Activated CD4-positive, alpha-beta T cell treated with anti-CD3 and anti-CD28 coated beads for 36 hours (primary cell): ENCODE measurements at regions of chr7 and their contacts with region 1.

Region 1: DNA sequence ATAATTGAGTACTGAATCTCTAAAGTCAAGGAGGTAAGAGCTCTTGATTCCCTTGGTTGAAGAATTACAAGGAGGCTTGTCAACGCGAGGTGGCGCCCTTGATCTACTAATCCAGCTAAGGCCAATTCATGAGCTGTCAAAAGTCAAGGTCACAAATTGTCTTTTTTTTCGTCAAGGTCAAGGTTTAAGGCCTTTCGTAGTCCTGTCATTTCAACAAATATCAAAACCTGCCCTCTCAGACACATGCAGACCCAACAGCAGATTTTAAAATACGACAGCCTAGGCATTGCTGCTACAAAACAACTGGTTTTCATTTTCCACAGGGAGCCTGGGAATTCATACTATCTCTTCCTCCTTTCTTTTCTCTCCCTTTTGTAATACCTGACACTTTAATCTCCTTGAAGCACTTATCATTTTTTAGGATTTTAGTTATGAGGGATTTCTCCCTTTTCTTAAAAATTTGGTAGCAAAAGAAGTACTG is 3.6 kb downstream of the HOXA13 start:
- DNase-seq: peak; percentile 92
- ATAC-seq: no peak
- H3K4me3 Mint-ChIP-seq: no peak overlapping the region
- H3K27ac Mint-ChIP-seq: no peak overlapping the region
- H3K4me1 Mint-ChIP-seq: peaks cover 24% of the 10 kb centered on the region
- H3K27me3 Mint-ChIP-seq: peaks cover 72% of the 10 kb centered on the region

Region 2: DNA sequence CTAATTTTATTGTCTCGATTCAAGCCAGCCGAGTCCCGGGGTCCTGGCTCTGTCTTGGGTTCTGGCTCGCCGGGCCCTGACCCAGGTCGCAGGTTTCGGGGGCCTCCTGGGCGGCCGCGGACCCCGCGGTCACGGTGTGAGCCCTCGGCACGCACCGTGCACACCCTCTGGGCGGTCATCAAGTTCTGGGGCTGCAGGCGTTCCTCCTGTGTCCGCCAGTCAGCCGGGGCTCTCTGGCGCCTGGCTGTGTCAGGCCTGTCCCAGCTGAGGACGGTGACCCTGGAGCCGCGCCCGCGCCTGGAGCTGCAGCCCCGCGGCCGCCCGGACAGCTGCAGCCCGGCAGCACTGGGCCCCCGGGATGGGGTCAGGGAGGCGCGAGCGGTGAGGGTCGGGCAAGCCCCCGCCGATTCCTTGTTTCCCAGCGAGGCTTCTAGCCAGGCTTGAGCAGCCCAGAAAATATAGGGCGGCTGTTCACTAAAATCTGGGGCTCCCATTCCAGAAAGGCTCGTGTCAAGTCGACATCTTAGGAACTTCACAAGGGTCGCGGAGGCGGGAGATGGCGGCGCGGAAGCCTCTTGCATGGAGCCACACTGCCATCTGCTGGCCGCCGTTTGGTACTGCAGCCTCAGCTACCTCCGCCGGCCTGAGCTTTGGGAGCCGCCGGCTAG is 35.6 kb before region 1 on chr7:
- CTCF ChIA-PET with region 1: interaction called, 3 read pairs
- POLR2A ChIA-PET with region 1: interaction called, 3 read pairs
- intact Hi-C with region 1: loop called (anchors 2 to 5 kb)
- DNase-seq: peak; percentile 91
- ATAC-seq: peak; percentile 50
- H3K4me3 Mint-ChIP-seq: peak overlapping the region; percentile 62
- H3K27ac Mint-ChIP-seq: no peak overlapping the region
- H3K4me1 Mint-ChIP-seq: peaks cover 24% of the 10 kb centered on the region
- H3K27me3 Mint-ChIP-seq: peaks cover 74% of the 10 kb centered on the region

Region 3: DNA sequence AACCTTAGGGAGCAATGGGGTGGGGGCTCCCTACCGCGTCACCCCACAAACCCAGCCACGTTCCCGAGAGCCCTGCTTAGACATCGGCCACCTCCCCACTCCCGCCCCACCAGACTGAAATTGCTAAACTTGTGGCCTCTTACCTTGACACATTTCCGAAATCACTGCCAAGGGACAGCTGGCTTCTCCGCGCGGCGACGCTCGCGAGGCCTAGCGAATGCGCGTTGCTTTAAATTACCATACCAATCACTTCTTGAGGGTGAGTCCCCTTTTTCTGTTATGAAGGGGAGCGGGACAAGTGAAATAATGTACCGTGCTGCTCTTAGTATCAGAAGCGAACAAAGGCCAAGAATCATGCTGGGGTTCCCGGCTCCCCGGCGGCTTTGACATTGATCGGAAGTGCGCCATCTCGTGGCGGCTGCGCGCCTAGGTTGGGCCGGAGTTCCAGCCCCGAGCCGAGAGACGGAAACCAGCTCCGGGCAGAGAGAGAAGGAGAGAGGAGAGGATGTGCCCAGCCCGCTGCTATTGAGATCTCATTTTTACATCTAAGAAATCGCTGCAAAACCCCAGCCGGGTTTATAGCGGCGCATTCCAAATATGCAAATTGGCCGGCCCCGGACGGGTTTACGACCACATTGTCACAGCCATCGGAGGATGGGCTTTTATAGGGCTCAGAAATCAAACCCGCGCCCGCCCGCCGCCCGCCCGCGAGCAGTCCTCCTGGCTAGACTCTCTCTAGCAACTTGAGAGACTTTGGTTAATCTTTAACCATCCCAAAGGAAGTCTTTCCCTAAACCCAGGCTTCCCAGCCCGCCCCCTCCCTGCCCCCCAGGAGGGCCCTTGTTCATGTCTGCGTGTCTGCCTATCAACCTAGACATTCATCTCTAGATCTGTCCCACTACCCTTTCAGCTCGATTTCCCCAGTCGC is 16.6 kb before region 1 on chr7:
- CTCF ChIA-PET with region 1: interaction called, 12 read pairs
- POLR2A ChIA-PET with region 1: no interaction called
- intact Hi-C with region 1: no loop called
- DNase-seq: peak; percentile 81
- ATAC-seq: peak; percentile 88
- H3K4me3 Mint-ChIP-seq: no peak overlapping the region
- H3K27ac Mint-ChIP-seq: no peak overlapping the region
- H3K4me1 Mint-ChIP-seq: peaks cover 10% of the 10 kb centered on the region
- H3K27me3 Mint-ChIP-seq: peaks cover 51% of the 10 kb centered on the region

Region 4: GRCh38 chr7:27242555-27243339 is 46.4 kb after region 1 on chr7 and contains the start of gene EVX1:
- CTCF ChIA-PET with region 1: interaction called, 7 read pairs
- POLR2A ChIA-PET with region 1: no interaction called
- intact Hi-C with region 1: loop called in 1 of 2 experiments (anchors 5 kb)
- DNase-seq: peak; percentile 77
- ATAC-seq: peak; percentile 56
- H3K4me3 Mint-ChIP-seq: peak within 1 kb of the TSS; percentile 33
- H3K27ac Mint-ChIP-seq: no peak within 1 kb of the TSS
- H3K4me1 Mint-ChIP-seq: peaks cover 18% of the 10 kb centered on the region
- H3K27me3 Mint-ChIP-seq: peaks cover 74% of the 10 kb centered on the region
- total RNA-seq, gene EVX1: not detected

Region 5: DNA sequence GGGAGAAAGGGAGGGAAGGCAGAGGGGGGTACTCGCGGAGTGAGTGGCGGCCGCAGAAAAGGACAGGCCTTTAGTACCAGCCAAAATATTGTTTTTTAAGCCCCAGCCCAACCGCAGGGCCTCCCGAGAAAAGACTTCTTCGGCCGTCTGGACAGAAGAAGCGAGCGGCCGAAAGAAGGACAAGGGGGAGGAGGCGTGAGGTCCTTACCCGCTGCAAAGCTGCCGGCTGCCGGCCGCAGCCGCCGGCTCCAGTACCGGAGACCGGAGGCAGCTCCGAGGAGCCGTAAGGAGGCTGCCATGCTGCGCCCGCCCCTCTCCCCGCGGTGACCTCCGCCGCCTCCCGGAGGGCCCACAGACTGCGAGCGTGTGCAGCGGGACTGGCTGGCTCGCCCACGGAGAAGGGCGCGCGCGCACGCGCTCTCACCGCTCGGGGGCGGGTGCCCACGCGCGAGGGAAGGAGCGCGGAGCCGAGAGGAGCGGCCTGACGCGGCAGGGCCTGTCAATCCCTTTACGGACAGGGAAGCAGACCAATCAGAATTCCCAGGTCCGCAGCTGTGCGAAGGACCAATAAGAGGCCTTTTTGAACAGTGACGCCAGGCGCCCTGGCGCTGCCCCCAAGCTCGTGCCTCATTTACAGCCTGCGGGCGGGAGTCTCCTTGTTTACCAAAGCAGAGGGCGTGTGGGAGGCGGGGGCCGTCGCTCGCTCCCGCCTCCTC is 466.3 kb after region 1 on chr7 and contains the start of gene HIBADH:
- CTCF ChIA-PET with region 1: interaction called, 4 read pairs
- POLR2A ChIA-PET with region 1: no interaction called
- intact Hi-C with region 1: loop called (anchors 5 to 10 kb)
- DNase-seq: peak; percentile 95
- ATAC-seq: peak; percentile 99
- H3K4me3 Mint-ChIP-seq: peak within 1 kb of the TSS; percentile 82
- H3K27ac Mint-ChIP-seq: peak within 1 kb of the TSS; percentile 74
- H3K4me1 Mint-ChIP-seq: peaks cover 8% of the 10 kb centered on the region
- H3K27me3 Mint-ChIP-seq: no peaks in the 10 kb centered on the region
- total RNA-seq, gene HIBADH: 20.3 to 20.5 TPM

Region 6: GRCh38 chr7:27921081-27921836 is 724.9 kb after region 1 on chr7:
- CTCF ChIA-PET with region 1: interaction called, 19 read pairs
- POLR2A ChIA-PET with region 1: no interaction called
- intact Hi-C with region 1: loop called (anchors 1 to 5 kb)
- DNase-seq: peak; percentile 32
- ATAC-seq: peak; percentile 44
- H3K4me3 Mint-ChIP-seq: no peak overlapping the region
- H3K27ac Mint-ChIP-seq: no peak overlapping the region
- H3K4me1 Mint-ChIP-seq: no peaks in the 10 kb centered on the region
- H3K27me3 Mint-ChIP-seq: no peaks in the 10 kb centered on the region

Region 7: DNA sequence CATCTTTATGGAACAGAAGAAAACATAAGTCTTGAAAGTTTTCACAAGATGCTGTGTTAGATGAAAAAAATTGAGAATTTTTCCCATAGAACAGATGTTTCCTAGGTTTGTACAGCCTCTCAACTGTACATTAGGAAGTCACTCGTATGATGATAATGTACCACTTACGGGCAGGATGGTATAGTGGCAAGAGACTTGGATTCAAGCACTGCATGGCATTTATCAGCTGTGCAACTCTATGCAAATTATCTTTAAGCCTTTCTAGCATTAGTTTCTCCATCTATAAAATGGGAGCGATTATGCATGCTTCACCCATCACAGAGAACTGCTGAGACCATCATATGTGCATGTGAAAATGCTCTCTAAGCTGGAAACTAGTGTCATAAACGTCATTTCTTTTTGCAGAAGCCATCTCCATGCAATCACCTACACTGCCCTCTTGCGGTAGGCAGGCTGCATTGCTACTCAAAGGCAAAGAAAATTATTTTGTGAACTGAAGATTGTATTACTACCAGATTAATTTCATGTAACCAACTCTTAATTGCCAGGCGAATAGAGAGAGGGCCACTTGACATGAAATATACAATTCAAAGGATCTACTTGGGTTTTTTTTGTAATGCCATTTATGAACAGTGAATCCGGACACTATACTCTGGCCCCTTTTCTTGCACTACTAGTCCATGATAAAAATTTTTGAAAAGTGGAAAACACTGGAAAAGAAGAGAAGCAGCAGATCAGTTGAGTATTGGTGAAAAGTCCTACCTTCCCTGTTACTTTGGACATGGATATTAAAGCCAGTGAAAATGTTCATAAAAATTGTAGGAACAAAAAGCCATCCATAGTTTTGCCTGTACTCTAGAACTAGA is 881.9 kb after region 1 on chr7:
- CTCF ChIA-PET with region 1: interaction called, 5 read pairs
- POLR2A ChIA-PET with region 1: no interaction called
- intact Hi-C with region 1: loop called (anchors 5 kb)
- DNase-seq: peak; percentile 66
- ATAC-seq: peak; percentile 70
- H3K4me3 Mint-ChIP-seq: no peak overlapping the region
- H3K27ac Mint-ChIP-seq: no peak overlapping the region
- H3K4me1 Mint-ChIP-seq: peaks cover 5% of the 10 kb centered on the region
- H3K27me3 Mint-ChIP-seq: no peaks in the 10 kb centered on the region